WTC11 (cell line): ENCODE measurements at regions of chr3 and their contacts with region 1.

Region 1: DNA sequence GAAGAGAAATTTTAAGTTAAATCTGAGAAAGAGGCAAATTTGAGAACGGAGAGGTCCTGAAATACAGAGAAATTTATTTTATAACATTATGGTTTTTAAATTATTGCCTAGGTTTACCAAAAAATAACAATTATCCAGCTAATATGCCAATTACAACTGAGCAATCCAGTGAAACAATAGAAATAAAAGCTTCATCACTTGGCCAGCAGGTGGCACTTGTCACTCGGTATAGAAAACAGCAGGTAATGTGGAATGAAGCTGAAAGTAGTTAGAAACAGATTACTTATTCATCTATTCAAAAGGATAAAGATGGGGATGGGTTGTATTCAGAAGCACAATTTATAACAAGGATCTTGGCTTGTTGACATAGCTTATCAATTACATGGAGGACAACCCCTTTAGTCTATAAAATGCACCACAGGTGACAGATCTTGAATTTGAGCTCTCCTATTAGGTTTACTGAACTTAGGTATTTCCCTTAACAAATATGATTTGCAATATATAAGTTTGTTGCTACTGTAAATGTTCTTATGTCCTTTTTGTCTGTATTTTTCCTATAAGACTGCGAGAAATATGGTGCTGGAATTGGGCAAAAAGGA is 70.1 kb upstream of the GUCA1C start:
- DNase-seq: peak; percentile 34
- ATAC-seq: no peak
- H3K4me3 Mint-ChIP-seq: no peak overlapping the region
- H3K27ac Mint-ChIP-seq: no peak overlapping the region
- H3K4me1 Mint-ChIP-seq: no peaks in the 10 kb centered on the region
- H3K27me3 Mint-ChIP-seq: no peaks in the 10 kb centered on the region
- CTCF ChIP-seq: peak; percentile 57

Region 2: GRCh38 chr3:108221911-108222852 is 801.6 kb before region 1 on chr3 and contains the start of gene IFT57:
- CTCF ChIA-PET with region 1: no interaction called
- POLR2A ChIA-PET with region 1: no interaction called
- DNase-seq: peak; percentile 97
- ATAC-seq: peak; percentile 98
- H3K4me3 Mint-ChIP-seq: peak within 1 kb of the TSS; percentile 97
- H3K27ac Mint-ChIP-seq: peak within 1 kb of the TSS; percentile 84
- H3K4me1 Mint-ChIP-seq: peaks cover 22% of the 10 kb centered on the region
- H3K27me3 Mint-ChIP-seq: no peaks in the 10 kb centered on the region; the same call in 1 of the 2 replicates
- CTCF ChIP-seq: no peak
- total RNA-seq, gene IFT57: 24.8 to 32.1 TPM (median 28.4 TPM) in 3 replicates

Region 3: DNA sequence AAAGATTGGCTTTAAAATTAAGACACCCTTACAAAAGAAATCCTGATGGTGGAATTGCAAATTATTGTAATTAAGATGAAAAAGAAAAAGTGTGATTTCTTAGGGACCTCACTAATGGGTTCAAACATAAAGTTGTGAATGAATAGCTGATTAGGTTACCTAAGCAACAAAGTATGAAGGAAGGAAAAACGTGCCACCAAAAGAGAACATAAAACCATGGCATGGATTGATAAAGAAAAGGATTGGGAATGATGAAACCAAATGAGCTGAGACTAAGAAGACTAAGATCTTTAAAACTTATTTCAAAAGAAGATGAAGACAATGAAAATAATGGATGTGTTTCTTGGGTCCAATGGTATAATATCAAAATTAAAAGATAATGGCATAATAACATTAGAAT is 37.9 kb before region 1 on chr3:
- CTCF ChIA-PET with region 1: interaction called, 10 read pairs
- POLR2A ChIA-PET with region 1: no interaction called
- DNase-seq: no peak
- ATAC-seq: no peak
- H3K4me3 Mint-ChIP-seq: no peak overlapping the region
- H3K27ac Mint-ChIP-seq: no peak overlapping the region
- H3K4me1 Mint-ChIP-seq: no peaks in the 10 kb centered on the region
- H3K27me3 Mint-ChIP-seq: no peaks in the 10 kb centered on the region
- CTCF ChIP-seq: no peak

Region 4: GRCh38 chr3:109045271-109046040 is 21.7 kb after region 1 on chr3:
- CTCF ChIA-PET with region 1: interaction called, 13 read pairs
- POLR2A ChIA-PET with region 1: no interaction called
- DNase-seq: no peak
- ATAC-seq: no peak
- H3K4me3 Mint-ChIP-seq: no peak overlapping the region
- H3K27ac Mint-ChIP-seq: no peak overlapping the region
- H3K4me1 Mint-ChIP-seq: peaks cover 16% of the 10 kb centered on the region
- H3K27me3 Mint-ChIP-seq: no peaks in the 10 kb centered on the region; the same call in 1 of the 2 replicates
- CTCF ChIP-seq: no peak

Region 5: GRCh38 chr3:109081746-109082510 is 58.2 kb after region 1 on chr3:
- CTCF ChIA-PET with region 1: interaction called, 45 read pairs
- POLR2A ChIA-PET with region 1: no interaction called
- DNase-seq: peak; percentile 52
- ATAC-seq: peak; percentile 100
- H3K4me3 Mint-ChIP-seq: no peak overlapping the region
- H3K27ac Mint-ChIP-seq: no peak overlapping the region
- H3K4me1 Mint-ChIP-seq: no peaks in the 10 kb centered on the region
- H3K27me3 Mint-ChIP-seq: no peaks in the 10 kb centered on the region
- CTCF ChIP-seq: peak; percentile 70

Region 6: DNA sequence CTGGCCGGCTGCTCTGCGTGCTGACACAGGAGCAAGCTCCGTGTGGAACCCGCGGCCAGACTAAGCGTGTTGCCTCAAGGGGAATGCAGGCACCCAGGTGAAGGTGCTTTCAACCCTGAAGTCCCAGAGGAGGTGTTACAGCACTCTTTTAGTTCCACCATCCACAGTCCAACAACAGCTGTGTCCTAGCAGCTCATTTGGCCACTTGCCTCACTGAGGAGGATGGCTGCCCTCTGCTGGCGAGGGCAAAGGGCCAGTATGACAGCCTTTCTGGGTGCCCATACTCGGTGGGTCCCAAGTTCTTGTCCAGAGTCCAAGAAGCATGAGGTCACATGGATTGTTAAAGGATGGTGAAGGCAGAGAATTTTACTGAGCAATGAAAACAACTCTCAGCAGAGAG is 200.6 kb after region 1 on chr3:
- CTCF ChIA-PET with region 1: interaction called, 36 read pairs
- POLR2A ChIA-PET with region 1: interaction called, 5 read pairs
- DNase-seq: peak; percentile 77
- ATAC-seq: peak; percentile 99
- H3K4me3 Mint-ChIP-seq: no peak overlapping the region
- H3K27ac Mint-ChIP-seq: no peak overlapping the region
- H3K4me1 Mint-ChIP-seq: 0 out of 2 replicates have a peak, but pooled peaks cover 4% of the 10 kb centered on the region
- H3K27me3 Mint-ChIP-seq: no peaks in the 10 kb centered on the region
- CTCF ChIP-seq: peak; percentile 30

Region 7: GRCh38 chr3:109607897-109608296 is 584.1 kb after region 1 on chr3:
- CTCF ChIA-PET with region 1: no interaction called
- POLR2A ChIA-PET with region 1: no interaction called
- DNase-seq: no peak
- ATAC-seq: no peak
- H3K4me3 Mint-ChIP-seq: no peak overlapping the region
- H3K27ac Mint-ChIP-seq: no peak overlapping the region
- H3K4me1 Mint-ChIP-seq: no peaks in the 10 kb centered on the region
- H3K27me3 Mint-ChIP-seq: no peaks in the 10 kb centered on the region
- CTCF ChIP-seq: no peak